ENCODE measurements at regions of chr6 and their contacts with region 1.

Region 1: GRCh38 chr6:129598244-129599187 is 111.5 kb downstream of the ARHGAP18 start:
- DNase-seq: no peak
- ATAC-seq: peak; percentile 74
- H3K4me3 Mint-ChIP-seq: no peak overlapping the region
- H3K27ac Mint-ChIP-seq: no peak overlapping the region
- H3K4me1 Mint-ChIP-seq: no peaks in the 10 kb centered on the region
- H3K27me3 Mint-ChIP-seq: no peaks in the 10 kb centered on the region

Region 2: DNA sequence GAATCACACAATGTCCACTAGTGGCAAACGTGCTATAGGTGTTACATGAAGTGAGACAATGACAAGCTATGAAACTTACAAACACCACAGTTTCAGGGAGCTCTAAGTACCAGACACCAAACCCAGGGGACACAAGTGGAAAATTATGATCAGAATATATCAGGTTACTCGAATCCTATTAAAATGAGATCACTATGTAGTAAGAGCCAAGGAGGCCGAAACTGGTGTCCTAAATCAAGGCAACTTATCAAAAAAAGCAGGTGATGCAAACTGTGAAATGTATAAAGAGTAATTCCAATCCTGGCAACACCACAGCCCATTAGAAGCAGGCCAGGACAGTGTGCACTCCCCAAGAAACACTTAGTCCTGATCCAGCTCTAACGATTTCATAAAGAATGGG is 11.1 kb after region 1 on chr6:
- CTCF ChIA-PET with region 1: interaction called, 15 read pairs
- POLR2A ChIA-PET with region 1: no interaction called
- intact Hi-C with region 1: no loop called
- DNase-seq: no peak
- ATAC-seq: no peak
- H3K4me3 Mint-ChIP-seq: no peak overlapping the region
- H3K27ac Mint-ChIP-seq: no peak overlapping the region
- H3K4me1 Mint-ChIP-seq: peaks cover 17% of the 10 kb centered on the region
- H3K27me3 Mint-ChIP-seq: no peaks in the 10 kb centered on the region

Region 3: DNA sequence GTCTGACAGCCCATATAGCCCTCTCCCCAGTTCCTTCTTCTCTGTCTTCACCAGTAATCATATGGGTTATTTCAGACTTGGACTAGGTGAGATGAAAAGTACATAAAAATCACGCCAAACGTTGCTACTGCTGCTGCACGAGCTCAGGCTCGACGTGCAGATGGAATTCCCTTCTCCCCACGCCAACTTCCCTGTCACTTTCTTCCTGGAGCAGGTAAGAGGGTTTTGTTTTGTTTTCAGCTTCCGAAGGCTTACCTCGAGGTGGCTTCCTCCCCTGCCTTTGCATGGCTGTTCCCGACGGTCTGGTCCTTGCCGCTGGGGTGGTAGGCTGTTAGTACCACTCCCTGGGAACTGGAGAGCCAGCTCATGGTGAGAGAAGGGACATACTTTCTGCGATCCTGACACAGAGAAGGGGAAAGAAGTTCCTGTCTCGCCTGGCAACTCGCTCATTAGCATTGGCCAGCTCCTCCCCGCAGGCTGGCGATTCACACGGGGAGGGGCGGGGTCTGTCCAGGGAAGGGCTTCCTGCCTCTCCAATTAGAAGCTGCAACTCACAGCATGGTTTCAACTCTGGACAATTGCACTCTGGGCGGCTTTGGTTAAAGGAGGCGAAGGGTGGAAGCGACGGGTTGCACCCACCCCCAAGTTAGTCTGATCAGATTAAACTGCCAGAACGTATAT is 111.4 kb after region 1 on chr6 and contains the start of gene ARHGAP18:
- CTCF ChIA-PET with region 1: interaction called, 14 read pairs
- POLR2A ChIA-PET with region 1: no interaction called
- intact Hi-C with region 1: no loop called
- DNase-seq: peak; percentile 84
- ATAC-seq: peak; percentile 94
- H3K4me3 Mint-ChIP-seq: peak within 1 kb of the TSS; percentile 88
- H3K27ac Mint-ChIP-seq: peak within 1 kb of the TSS; percentile 83
- H3K4me1 Mint-ChIP-seq: peaks cover 27% of the 10 kb centered on the region
- H3K27me3 Mint-ChIP-seq: peaks cover 2% of the 10 kb centered on the region
- total RNA-seq, gene ARHGAP18: 5.2 to 6.8 TPM

Region 4: DNA sequence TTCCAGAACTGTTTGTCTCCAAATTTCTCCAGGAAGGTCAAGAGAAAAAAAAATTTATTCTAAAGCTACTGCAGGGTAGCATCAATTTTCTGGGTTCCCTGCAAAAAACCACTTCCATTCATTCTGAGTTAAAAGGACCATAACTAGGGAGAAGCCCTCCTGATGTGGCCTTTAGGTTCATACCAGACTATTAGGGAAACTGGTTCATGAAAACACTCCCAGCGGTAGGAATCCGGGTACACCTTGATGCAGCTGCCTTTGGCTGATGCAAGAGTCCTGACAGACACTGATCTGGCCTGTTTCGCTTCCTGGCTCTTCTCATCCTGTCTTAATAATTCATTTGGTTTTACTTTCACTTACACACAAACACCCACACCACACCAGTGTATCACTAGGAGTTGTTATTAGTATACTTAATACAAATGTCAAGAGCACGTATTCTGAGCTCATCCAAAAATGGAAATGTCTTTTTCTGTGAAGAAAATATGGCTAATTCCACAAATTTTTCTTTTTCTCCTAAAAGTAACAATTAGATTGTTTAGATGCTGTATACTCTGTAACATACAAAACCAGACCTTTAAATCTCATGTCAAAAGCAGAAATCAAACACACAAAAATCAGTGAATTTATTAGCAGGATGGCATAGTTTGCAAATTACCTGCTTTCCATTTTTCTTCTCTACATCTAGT is 149.8 kb after region 1 on chr6:
- CTCF ChIA-PET with region 1: interaction called, 29 read pairs
- POLR2A ChIA-PET with region 1: no interaction called
- intact Hi-C with region 1: no loop called
- DNase-seq: peak; percentile 76
- ATAC-seq: peak; percentile 93
- H3K4me3 Mint-ChIP-seq: peak overlapping the region; percentile 62
- H3K27ac Mint-ChIP-seq: peak overlapping the region; percentile 92
- H3K4me1 Mint-ChIP-seq: peaks cover 61% of the 10 kb centered on the region
- H3K27me3 Mint-ChIP-seq: no peaks in the 10 kb centered on the region

Region 5: DNA sequence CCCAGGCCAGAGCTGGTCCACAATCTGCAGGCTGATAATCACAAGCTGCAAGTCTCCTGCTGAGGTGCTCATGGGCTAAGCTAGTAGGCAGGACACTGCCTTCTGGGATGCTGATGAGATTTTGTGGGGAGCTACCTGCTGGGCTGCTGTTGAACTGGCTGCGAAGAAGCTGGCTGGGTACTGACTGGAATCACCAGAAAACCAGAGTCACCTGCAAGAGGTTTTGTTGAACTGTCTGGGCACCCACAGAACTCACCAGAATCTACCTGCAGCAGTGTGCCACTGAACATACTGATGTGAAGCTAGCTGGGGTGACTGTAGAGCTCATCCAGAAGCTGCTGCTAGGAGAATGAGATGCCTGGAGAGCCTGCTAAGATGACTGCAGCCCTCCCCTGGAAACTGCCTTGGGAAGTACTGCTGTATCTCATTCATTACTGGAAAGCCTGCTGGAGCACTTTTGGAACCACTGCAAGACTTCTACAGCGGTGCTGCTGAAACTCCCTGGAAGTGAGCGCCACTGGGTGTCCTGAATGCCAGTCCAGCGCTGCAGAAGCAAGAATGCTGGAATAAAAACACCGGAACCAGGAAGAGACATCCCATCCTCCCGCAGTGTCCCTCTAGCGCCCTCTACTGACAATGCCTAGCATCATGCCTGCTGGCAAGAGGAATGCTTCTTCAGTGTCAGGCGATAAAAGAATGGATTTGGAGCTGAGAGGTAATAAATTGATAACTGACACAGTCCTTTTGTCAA is 176.4 kb after region 1 on chr6:
- CTCF ChIA-PET with region 1: interaction called, 36 read pairs
- POLR2A ChIA-PET with region 1: no interaction called
- intact Hi-C with region 1: loop called in 1 of 2 experiments (anchors 1 kb)
- DNase-seq: peak; percentile 68
- ATAC-seq: peak; percentile 23
- H3K4me3 Mint-ChIP-seq: no peak overlapping the region
- H3K27ac Mint-ChIP-seq: no peak overlapping the region
- H3K4me1 Mint-ChIP-seq: no peaks in the 10 kb centered on the region
- H3K27me3 Mint-ChIP-seq: peaks cover 9% of the 10 kb centered on the region

Region 6: GRCh38 chr6:130020907-130021629 is 422.6 kb after region 1 on chr6:
- CTCF ChIA-PET with region 1: interaction called, 11 read pairs
- POLR2A ChIA-PET with region 1: no interaction called
- intact Hi-C with region 1: loop called (anchors 1 kb)
- DNase-seq: peak; percentile 85
- ATAC-seq: peak; percentile 59
- H3K4me3 Mint-ChIP-seq: peak overlapping the region; percentile 91
- H3K27ac Mint-ChIP-seq: peak overlapping the region; percentile 90
- H3K4me1 Mint-ChIP-seq: peaks cover 38% of the 10 kb centered on the region
- H3K27me3 Mint-ChIP-seq: no peaks in the 10 kb centered on the region

Measured in activated CD4-positive, alpha-beta T cell treated with anti-CD3 and anti-CD28 coated beads for 36 hours (primary cell).